ENCODE measurements at regions of chr15 and their contacts with region 1.

Region 1: GRCh38 chr15:72231066-72231846 is at the start of gene PKM:
- DNase-seq: peak; percentile 98
- ATAC-seq: peak; percentile 93
- total RNA-seq, gene PKM: 1,022 TPM

Region 2: DNA sequence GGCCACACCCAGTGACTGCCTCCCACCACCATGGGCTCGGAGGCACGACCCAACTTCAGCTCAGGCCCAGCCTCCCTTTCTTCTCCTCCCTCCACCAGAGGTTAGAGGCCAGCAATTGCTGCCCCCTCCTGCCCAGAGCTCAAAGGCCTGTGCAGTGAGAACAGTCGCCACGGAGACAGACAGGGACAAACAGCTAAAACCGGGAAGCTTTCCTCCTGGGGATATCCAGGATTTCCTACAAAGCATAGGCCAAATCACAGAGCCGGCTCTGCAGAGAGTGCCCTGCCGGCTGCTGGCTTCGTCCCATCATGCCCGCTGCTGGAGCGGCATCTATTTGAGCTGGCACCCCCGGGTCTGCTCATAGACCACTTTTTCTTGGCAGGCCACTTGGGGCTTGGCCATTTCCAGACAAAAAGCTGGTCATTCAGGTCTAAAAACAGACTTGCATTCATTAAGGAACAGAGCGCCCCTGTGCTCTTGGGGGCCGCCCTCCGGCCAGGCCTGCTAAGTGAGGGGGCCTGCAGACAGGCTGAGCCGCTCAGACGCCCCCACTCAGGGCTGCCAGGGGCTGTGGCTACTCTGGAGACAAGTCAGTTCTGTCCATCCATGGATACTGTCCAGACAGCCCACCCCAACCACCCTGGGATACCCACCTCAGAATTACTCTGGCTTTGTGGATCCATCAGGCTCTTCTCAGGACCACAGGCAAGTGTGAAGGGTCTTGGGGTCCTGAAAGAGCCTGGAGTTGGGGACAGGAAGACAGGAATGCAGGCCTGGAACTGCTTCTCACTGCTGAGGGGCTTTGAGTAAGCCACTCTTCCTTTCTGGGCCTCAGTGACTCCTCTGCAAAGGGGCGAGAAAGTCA is 51.1 kb before region 1 on chr15:
- intact Hi-C with region 1: no loop called
- DNase-seq: no peak
- ATAC-seq: no peak

Region 3: GRCh38 chr15:72272213-72273002 is 41.2 kb after region 1 on chr15 and contains the start of gene PARP6:
- intact Hi-C with region 1: loop called (anchors 2 kb)
- DNase-seq: peak; percentile 99
- ATAC-seq: peak; percentile 100
- total RNA-seq, gene PARP6: 46.4 TPM

Region 4: GRCh38 chr15:72365844-72366243 is 134.6 kb after region 1 on chr15:
- intact Hi-C with region 1: no loop called
- DNase-seq: no peak
- ATAC-seq: no peak